GM12878 (cell line): ENCODE measurements at regions of chr4 and their contacts with region 1.

Region 1: DNA sequence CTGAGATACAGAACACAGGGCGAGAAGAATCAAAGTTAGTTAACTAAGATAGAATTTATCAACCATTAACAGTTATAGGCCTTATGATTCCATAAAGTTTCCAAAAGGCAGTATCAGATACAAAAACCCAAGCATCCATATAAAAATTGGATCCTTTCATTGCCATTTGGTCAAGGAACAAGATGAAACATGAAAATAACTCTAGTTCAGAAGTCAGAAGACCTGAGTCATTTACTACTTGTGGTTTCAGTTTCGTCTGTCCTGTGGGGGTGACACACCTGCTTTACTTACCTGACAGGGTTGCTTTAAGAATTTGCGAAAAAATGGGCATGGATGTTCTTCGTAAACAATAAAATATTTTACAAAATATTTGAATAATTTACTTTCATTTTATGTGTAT is 130.8 kb downstream of the ANAPC10 start:
- DNase-seq: no peak
- ATAC-seq: peak; percentile 47
- H3K4me3 ChIP-seq: no peak overlapping the region
- H3K27ac ChIP-seq: peak overlapping the region; percentile 25; the same call in 1 of the 2 replicates
- H3K4me1 ChIP-seq: peaks cover 12% of the 10 kb centered on the region
- H3K27me3 ChIP-seq: no peaks in the 10 kb centered on the region
- CTCF ChIP-seq: no peak
- EP300 ChIP-seq: no peak
- POLR2A ChIP-seq: no peak
- RAD21 ChIP-seq: no peak

Region 2: GRCh38 chr4:144787365-144788258 is 179.5 kb before region 1 on chr4:
- CTCF ChIA-PET with region 1: no interaction called
- POLR2A ChIA-PET with region 1: no interaction called
- RAD21 ChIA-PET with region 1: interaction called, 7 read pairs
- SMC1A ChIA-PET with region 1: no interaction called
- in situ Hi-C with region 1: no loop called
- intact Hi-C with region 1: loop called (anchors 2 kb)
- DNase-seq: no peak
- ATAC-seq: peak; percentile 89
- H3K4me3 ChIP-seq: no peak overlapping the region
- H3K27ac ChIP-seq: no peak overlapping the region
- H3K4me1 ChIP-seq: no peaks in the 10 kb centered on the region
- H3K27me3 ChIP-seq: no peaks in the 10 kb centered on the region
- CTCF ChIP-seq: peak; percentile 42 to 57 (median 49); a peak in 5 of 6 replicates
- EP300 ChIP-seq: 0 out of 4 replicates have a peak, but pooled peaks of 1 of the 2 experiments have one; percentile 40
- POLR2A ChIP-seq: no peak
- RAD21 ChIP-seq: peak; percentile 66

Region 3: DNA sequence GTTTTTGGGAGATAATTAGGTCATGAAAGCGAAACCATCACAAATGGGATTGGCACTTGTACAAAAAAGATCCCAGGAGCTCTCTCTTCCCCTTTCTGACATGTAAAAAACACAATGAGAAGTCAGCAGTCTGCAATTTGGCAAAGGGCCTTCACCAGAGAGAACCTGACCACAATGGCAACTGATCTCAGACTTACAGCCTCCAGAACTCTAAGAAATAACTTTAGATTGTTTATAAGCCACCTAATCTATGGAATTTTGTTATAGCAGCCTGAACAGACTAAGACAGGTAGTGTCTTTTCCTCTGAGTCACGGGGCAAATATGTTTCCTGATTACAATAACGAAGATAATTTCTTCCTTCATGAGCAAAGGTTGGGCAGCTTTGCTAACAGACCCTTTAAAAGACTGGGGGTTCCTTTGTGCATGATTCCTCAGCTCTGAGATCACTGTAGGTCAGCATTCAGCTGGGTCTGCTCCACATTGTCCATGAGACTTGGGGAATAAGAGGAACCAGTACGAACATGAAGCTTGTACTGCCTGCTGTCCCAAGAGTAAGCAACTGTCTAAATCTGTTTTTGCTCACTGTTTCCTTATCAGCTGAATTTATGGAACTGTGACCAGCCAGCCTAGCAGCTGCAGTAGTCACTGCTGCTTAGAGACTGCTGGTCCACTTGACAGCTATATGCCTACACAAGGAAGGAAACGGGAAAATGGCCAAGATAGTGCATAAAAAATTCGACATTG is 60.8 kb before region 1 on chr4:
- CTCF ChIA-PET with region 1: interaction called, 9 read pairs
- POLR2A ChIA-PET with region 1: interaction called, 4 read pairs
- RAD21 ChIA-PET with region 1: interaction called, 20 read pairs
- SMC1A ChIA-PET with region 1: interaction called, 35 read pairs
- in situ Hi-C with region 1: no loop called
- intact Hi-C with region 1: loop called (anchors 2 kb)
- DNase-seq: peak; percentile 38
- ATAC-seq: peak; percentile 81
- H3K4me3 ChIP-seq: no peak overlapping the region
- H3K27ac ChIP-seq: peak overlapping the region; percentile 55; the same call in 1 of the 2 replicates
- H3K4me1 ChIP-seq: peaks cover 15% of the 10 kb centered on the region
- H3K27me3 ChIP-seq: no peaks in the 10 kb centered on the region
- CTCF ChIP-seq: no peak
- EP300 ChIP-seq: peak; percentile 44 to 74; a peak in 2 of 4 replicates
- POLR2A ChIP-seq: no peak
- RAD21 ChIP-seq: no peak

Region 4: DNA sequence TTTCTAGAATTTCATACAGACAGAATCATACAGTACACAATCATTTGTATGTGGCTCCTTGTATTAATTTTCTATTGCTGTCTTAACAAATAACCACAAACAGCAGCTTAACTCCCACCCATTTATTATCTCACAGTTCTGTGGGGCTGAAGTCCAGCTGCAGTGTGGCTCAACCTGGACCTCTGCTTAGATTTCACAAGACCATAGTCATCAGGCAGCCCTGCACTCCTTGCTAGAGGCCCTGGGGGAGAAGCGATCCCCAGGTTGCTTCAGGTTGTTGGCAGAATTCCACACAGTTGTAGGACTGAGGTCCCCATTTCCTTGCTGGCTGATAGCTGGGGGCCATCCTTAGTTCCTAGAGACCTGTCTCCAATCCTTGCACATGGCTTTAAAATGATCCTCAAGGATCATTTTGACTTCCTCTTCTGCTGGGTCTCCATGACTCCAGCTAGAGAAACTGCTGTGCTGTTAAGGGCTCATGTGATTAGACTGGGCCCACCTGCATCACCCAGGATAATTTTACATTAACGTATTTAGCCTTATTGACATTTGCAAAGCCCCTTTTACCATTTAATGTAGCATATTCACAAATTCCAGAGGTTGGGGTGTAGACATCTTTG is 453.5 kb after region 1 on chr4:
- CTCF ChIA-PET with region 1: no interaction called
- POLR2A ChIA-PET with region 1: no interaction called
- RAD21 ChIA-PET with region 1: no interaction called
- SMC1A ChIA-PET with region 1: no interaction called
- in situ Hi-C with region 1: no loop called
- intact Hi-C with region 1: no loop called
- DNase-seq: no peak
- ATAC-seq: no peak
- H3K4me3 ChIP-seq: no peak overlapping the region
- H3K27ac ChIP-seq: no peak overlapping the region
- H3K4me1 ChIP-seq: no peaks in the 10 kb centered on the region
- H3K27me3 ChIP-seq: no peaks in the 10 kb centered on the region
- CTCF ChIP-seq: no peak
- EP300 ChIP-seq: no peak
- POLR2A ChIP-seq: no peak
- RAD21 ChIP-seq: no peak